ENCODE measurements at regions of chr2 and their contacts with region 1.

Region 1: GRCh38 chr2:201363857-201364560 is 6.9 kb upstream of the FLACC1 start:
- DNase-seq: no peak
- ATAC-seq: peak; percentile 96
- H3K4me3 ChIP-seq: no peak overlapping the region
- H3K27ac ChIP-seq: no peak overlapping the region
- H3K4me1 ChIP-seq: peaks cover 4% of the 10 kb centered on the region
- H3K27me3 ChIP-seq: no peaks in the 10 kb centered on the region
- CTCF ChIP-seq: peak; percentile 90

Region 2: GRCh38 chr2:201231781-201232466 is 132.1 kb before region 1 on chr2:
- intact Hi-C with region 1: loop called (anchors 10 kb)
- DNase-seq: peak; percentile 96
- ATAC-seq: peak; percentile 93
- H3K4me3 ChIP-seq: no peak overlapping the region
- H3K27ac ChIP-seq: peak overlapping the region; percentile 86
- H3K4me1 ChIP-seq: peaks cover 45% of the 10 kb centered on the region
- H3K27me3 ChIP-seq: no peaks in the 10 kb centered on the region
- CTCF ChIP-seq: peak; percentile 95

Measured in upper lobe of right lung (tissue), 1 donor.